ENCODE measurements at regions of chr6 and their contacts with region 1.

Region 1: DNA sequence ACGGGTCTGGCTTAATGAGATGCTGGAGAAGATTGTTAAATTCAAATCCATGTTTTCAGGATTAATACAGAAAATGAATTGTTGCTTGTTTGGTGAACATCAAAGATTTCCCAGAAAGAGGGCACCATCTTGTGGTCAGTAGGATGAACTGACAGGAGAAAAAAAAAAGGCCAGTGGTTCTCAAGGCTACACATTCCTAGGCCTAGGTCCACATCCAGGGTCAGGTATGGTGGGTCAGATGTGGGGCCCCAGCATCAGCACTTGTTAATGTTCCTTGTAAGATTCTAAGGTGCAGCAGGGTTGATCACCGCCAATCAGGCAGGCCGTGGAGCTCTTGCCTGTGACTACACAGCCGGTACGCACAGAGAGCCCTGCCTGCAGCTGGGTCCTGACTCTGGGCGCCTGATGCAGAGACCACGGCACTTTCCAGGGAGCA is 34.0 kb upstream of the FOXO3 start:
- DNase-seq: no peak
- ATAC-seq: peak in 3 of 4 donors; percentile 42 to 49 (median 45)
- H3K4me3 ChIP-seq: no peak overlapping the region
- H3K27ac ChIP-seq: no peak overlapping the region
- H3K4me1 ChIP-seq: peaks cover 0 to 4% (median 0%) of the 10 kb centered on the region in 12 donors
- H3K27me3 ChIP-seq: no peaks in the 10 kb centered on the region
- CTCF ChIP-seq: peak; percentile 59 to 87 (median 82)
- POLR2A ChIP-seq: no peak

Region 2: GRCh38 chr6:107977283-107977682 is 549.5 kb before region 1 on chr6:
- intact Hi-C with region 1: loop called (anchors 5 to 10 kb)
- DNase-seq: no peak
- ATAC-seq: no peak
- H3K4me3 ChIP-seq: no peak overlapping the region
- H3K27ac ChIP-seq: no peak overlapping the region
- H3K4me1 ChIP-seq: no peaks in the 10 kb centered on the region
- H3K27me3 ChIP-seq: no peaks in the 10 kb centered on the region
- CTCF ChIP-seq: peak in 11 of 12 donors; percentile 12 to 55 (median 38)
- POLR2A ChIP-seq: no peak

Region 3: GRCh38 chr6:107982486-107982885 is 544.3 kb before region 1 on chr6:
- intact Hi-C with region 1: loop called (anchors 5 to 10 kb)
- DNase-seq: no peak
- ATAC-seq: no peak
- H3K4me3 ChIP-seq: no peak overlapping the region
- H3K27ac ChIP-seq: no peak overlapping the region
- H3K4me1 ChIP-seq: no peaks in the 10 kb centered on the region
- H3K27me3 ChIP-seq: no peaks in the 10 kb centered on the region
- CTCF ChIP-seq: no peak
- POLR2A ChIP-seq: no peak

Region 4: DNA sequence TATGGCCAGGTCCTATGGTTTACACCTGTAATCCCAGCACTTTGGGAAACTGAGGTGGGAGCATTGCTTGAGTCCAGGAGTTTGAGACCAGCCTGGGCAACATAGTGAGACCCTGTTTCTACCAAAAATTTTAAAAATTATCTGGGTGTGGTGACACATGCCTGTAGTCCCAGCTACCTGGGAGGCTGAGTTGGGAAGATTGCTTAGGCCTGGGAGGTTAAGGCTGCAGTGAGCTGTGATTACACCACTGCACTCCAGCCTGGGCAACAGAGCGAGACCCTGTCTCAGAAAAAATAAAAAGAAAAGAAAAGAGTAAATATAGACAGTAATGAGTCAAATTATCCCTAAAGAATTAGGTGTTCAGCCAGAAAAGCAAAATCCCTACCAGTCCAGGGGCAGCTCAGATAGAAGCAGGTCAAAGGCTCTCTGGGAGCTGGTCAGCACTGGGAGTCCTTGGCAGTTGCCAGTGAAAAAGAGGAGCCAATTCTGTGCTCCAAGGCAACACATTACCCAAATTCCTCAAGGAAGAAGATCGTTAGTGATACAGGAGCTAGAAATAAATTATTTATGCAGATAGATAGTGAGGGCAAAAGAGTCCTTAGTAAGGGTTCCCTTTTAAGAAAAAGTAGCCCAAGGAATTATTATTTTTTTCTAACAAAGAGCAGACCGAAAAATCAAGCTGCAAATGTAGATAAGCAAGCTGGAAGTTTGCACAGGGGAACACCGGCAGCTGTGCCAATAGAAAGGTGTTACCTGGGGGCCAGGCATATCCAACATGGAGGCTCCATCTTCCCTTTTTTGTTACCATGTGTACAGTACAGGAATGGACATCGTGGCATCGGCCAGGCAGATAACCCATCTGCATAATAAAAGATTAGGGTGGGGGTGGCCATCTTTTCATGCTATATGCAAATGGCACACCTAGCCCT is 537.3 kb before region 1 on chr6:
- intact Hi-C with region 1: loop called in 2 of 10 experiments (anchors 5 to 10 kb)
- DNase-seq: no peak
- ATAC-seq: no peak
- H3K4me3 ChIP-seq: no peak overlapping the region
- H3K27ac ChIP-seq: no peak overlapping the region
- H3K4me1 ChIP-seq: no peaks in the 10 kb centered on the region
- H3K27me3 ChIP-seq: no peaks in the 10 kb centered on the region
- CTCF ChIP-seq: no peak
- POLR2A ChIP-seq: no peak

Region 5: DNA sequence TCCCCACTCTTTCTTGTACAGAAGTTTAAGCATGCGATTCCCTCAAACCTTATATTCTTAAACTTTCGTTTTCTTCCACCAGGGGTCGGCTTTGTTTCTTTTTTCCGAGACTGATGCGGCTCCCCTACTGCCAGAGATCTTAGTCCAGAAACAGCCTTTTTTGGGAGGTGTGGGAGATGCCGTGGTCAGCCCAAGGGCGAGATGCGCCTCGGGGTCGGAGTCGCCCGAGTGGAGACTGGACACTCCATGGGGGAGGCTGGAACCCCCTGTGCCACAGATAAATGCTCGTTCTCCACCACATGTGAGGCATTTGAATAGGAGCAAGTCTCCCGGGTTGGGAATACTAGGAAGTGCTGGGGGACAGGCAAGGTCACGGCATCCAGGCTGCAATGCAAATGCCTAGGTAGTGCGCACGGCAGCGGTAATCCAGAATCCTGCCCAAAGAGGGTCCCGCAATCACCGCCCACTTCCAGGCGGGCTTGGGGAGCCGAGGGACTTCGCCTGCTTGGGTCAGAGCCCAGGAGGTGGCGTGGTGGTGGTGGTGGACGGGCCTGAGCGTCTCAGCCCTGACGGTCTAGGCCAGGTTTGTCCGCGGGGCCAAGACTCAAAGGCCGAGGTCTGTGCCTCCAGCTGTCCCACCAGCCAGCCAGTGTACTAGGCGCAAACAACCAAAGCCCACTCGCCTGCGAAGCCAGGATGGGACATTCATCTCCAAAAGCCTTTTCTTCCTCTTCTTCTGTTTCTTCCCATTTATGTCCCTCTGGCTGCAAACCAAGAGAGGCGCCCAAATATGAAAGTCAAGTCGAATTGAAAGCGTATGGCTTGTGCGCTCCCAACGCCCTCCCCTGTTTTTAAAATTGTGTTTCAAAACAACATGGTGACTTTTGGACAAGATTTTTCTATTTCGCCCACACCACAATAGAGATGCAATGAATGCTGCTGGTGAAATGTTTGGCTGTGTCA is 412.9 kb before region 1 on chr6:
- intact Hi-C with region 1: loop called in 9 of 10 experiments (anchors 1 to 5 kb)
- DNase-seq: peak in 2 of 5 donors; percentile 21 to 67
- ATAC-seq: peak; percentile 19 to 48 (median 30)
- H3K4me3 ChIP-seq: peak overlapping the region in 9 of 12 donors; percentile 7 to 57 (median 20)
- H3K27ac ChIP-seq: no peak overlapping the region
- H3K4me1 ChIP-seq: peaks cover 0 to 47% (median 34%) of the 10 kb centered on the region in 12 donors
- H3K27me3 ChIP-seq: peaks cover 28 to 93% (median 61%) of the 10 kb centered on the region in 9 donors
- CTCF ChIP-seq: peak in 11 of 12 donors; percentile 24 to 63 (median 46)
- POLR2A ChIP-seq: no peak

Region 6: GRCh38 chr6:108127826-108128225 is 398.9 kb before region 1 on chr6:
- intact Hi-C with region 1: no loop called
- DNase-seq: no peak
- ATAC-seq: no peak
- H3K4me3 ChIP-seq: no peak overlapping the region
- H3K27ac ChIP-seq: no peak overlapping the region
- H3K4me1 ChIP-seq: no peaks in the 10 kb centered on the region
- H3K27me3 ChIP-seq: peaks cover 7 to 81% (median 27%) of the 10 kb centered on the region in 9 donors
- CTCF ChIP-seq: no peak
- POLR2A ChIP-seq: no peak

Region 7: GRCh38 chr6:108558372-108559096 is 31.8 kb after region 1 on chr6:
- intact Hi-C with region 1: no loop called
- DNase-seq: peak; percentile 98 to 100 (median 99)
- ATAC-seq: peak; percentile 72 to 79 (median 73)
- H3K4me3 ChIP-seq: peak overlapping the region; percentile 81 to 99 (median 96)
- H3K27ac ChIP-seq: peak overlapping the region; percentile 94 to 100 (median 99)
- H3K4me1 ChIP-seq: peaks cover 0 to 40% (median 24%) of the 10 kb centered on the region in 12 donors
- H3K27me3 ChIP-seq: no peaks in the 10 kb centered on the region
- CTCF ChIP-seq: no peak
- POLR2A ChIP-seq: peak in 1 of 2 donors; percentile 65

Region 8: DNA sequence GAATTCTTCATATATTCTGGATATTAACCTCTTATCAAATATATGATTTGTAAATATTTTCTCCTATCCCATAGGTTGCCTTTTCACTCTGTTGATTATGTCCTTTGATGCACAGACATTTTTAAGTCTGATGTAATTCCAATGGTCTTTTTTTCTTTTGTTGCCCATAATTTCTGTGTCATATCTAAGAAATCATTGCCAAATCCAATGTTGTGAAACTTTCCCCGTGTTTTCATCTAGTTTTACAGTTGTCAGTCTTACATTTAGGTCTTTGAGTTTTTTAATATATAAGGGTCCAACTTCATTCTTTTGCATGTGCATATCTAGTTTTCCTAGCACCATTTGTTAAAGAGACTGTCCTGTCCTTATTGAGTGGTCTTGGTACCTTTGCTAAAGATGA is 456.4 kb after region 1 on chr6:
- intact Hi-C with region 1: no loop called
- DNase-seq: no peak
- ATAC-seq: no peak
- H3K4me3 ChIP-seq: no peak overlapping the region
- H3K27ac ChIP-seq: peak overlapping the region in 1 of 12 donors; percentile 28
- H3K4me1 ChIP-seq: peaks cover 0 to 31% (median 4%) of the 10 kb centered on the region in 12 donors
- H3K27me3 ChIP-seq: no peaks in the 10 kb centered on the region
- CTCF ChIP-seq: no peak
- POLR2A ChIP-seq: no peak

Measured in heart left ventricle (tissue), 16 donors.